Endothelial cell of umbilical vein (primary cell): ENCODE measurements at regions of chr1 and their contacts with region 1.

Region 1: GRCh38 chr1:109877320-109877771 is 33.3 kb upstream of the CSF1 start:
- DNase-seq: peak; percentile 56
- H3K4me3 ChIP-seq: no peak overlapping the region
- H3K27ac ChIP-seq: no peak overlapping the region
- H3K4me1 ChIP-seq: peaks cover 8% of the 10 kb centered on the region
- H3K27me3 ChIP-seq: peaks cover 7 to 15% of the 10 kb centered on the region in 2 experiments
- CTCF ChIP-seq: peak in 1 of 2 donors; percentile 25
- POLR2A ChIP-seq: no peak

Region 2: GRCh38 chr1:109821221-109821669 is 56.1 kb before region 1 on chr1:
- CTCF ChIA-PET with region 1: interaction called, 3 read pairs
- POLR2A ChIA-PET with region 1: no interaction called
- dilution Hi-C with region 1: no loop called
- intact Hi-C with region 1: loop called (anchors 5 kb)
- DNase-seq: no peak
- H3K4me3 ChIP-seq: no peak overlapping the region
- H3K27ac ChIP-seq: no peak overlapping the region
- H3K4me1 ChIP-seq: peaks cover 10% of the 10 kb centered on the region
- H3K27me3 ChIP-seq: no peaks in the 10 kb centered on the region
- CTCF ChIP-seq: no peak
- POLR2A ChIP-seq: no peak

Region 3: DNA sequence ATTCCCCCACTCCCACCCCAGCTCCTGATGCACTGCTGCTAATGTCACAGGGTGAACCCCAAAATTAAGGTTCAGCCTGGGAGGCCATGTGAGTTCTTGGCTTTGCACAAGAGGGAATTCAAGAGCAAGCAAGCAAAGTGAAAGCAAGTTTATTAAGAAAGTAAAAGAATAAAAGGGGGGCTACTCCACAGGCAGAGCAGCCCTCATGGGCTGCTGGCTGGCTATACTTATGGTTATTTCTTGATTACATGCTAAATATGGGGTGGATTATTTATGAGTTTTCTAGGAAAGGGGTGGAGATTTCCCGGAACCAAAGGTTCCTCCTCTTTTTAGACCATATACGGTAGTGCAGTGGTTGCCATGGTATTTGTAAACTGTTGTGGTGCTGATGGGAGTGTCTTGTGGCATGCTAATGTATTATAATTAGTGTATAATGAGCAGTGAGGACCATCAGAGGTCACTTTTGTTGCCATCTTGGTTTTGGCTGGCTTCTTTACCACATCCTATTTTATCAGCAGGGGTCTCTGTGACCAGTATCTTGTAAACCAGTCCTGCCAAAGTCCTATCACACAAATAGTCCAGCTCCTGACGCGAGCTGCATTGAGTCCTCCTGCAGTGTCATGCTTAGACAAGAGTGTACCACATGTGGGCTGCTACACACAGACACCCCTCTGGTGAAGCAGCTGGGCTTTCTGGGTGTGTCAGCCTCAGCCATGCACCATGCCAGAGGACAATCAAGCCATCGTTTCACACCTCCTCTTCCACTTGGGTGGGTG is 13.1 kb before region 1 on chr1:
- CTCF ChIA-PET with region 1: no interaction called
- POLR2A ChIA-PET with region 1: no interaction called
- dilution Hi-C with region 1: no loop called
- intact Hi-C with region 1: no loop called
- DNase-seq: no peak
- H3K4me3 ChIP-seq: no peak overlapping the region
- H3K27ac ChIP-seq: no peak overlapping the region
- H3K4me1 ChIP-seq: no peaks in the 10 kb centered on the region
- H3K27me3 ChIP-seq: peaks cover 8% of the 10 kb centered on the region in 2 experiments
- CTCF ChIP-seq: no peak
- POLR2A ChIP-seq: no peak

Region 4: DNA sequence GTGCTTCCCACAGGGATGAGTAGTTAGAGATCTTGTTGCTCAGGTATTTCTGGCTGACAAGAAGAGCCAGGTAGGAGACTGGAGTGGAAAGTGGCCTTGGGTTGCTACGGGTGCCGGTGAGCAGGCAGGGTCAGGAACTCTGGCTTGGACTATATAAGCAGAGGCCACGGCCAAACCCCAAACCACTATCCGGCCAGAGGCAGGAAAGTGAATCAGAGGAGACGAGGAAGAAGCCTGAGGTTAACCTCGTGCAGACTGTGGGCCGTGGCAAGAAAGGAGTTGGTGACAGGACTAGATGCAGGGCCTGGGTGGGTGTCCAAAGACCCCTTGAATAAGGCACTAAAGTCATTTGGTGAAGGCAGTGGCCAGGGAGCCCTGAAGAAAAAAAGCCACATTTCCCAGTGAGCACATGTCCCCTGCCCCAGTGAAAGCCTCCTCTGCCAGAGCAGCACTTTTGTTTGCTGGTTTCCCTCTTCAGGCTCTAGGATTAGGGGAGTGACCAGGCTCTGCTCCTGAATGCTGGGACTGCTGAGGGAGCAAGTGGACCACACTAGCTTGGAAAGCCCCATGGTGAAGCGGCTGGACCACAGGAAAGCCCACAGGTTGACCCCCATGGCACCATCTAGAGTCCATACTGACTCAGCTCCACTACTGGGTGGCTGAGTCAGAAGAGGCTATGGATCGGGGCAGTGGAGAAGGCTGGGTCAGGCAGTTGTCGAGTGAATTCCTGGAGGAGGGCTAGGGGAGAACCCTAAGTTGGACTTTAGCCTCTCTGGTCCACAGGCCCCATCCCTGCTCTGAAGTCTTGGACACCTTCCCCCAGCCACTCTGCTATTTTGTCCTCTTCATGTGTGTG is 56.7 kb after region 1 on chr1:
- CTCF ChIA-PET with region 1: no interaction called
- POLR2A ChIA-PET with region 1: no interaction called
- dilution Hi-C with region 1: no loop called
- intact Hi-C with region 1: no loop called
- DNase-seq: peak; percentile 44
- H3K4me3 ChIP-seq: no peak overlapping the region
- H3K27ac ChIP-seq: peak overlapping the region; percentile 19
- H3K4me1 ChIP-seq: peaks cover 11% of the 10 kb centered on the region
- H3K27me3 ChIP-seq: peaks cover 0 to 4% of the 10 kb centered on the region in 2 experiments
- CTCF ChIP-seq: no peak
- POLR2A ChIP-seq: no peak